Activated CD4-positive, alpha-beta memory T cell treated with anti-CD3 and anti-CD28 coated beads for 36 hours (primary cell): ENCODE measurements at regions of chr4 and their contacts with region 1.

Region 1: DNA sequence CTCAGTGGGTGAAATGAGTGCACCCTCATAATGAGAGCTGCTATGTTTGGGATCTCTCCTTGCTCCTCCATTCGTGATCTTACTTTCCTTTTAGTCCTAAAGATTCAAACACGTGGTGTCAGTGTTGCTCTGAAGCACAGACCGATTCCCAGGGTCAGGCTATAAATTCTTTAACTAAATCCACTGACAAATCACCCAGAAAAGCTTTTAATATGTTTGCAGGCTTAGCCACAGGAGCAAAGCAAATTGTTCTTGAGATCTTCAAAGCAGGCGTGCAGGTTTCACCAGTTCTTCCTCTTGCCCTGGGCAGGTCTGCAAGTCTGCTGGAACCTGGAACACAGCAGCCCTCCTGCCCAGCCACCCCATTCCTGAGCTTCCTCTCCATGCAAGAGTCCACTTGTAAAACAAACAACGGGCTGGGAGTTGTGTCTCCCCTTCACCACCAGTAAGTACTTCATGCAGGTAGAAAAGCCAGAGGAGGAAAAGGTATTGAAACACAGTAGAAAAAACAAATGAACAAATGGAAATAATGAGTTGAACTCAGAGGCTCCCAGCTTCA is 70.1 kb upstream of the ENPP6 start:
- DNase-seq: no peak
- H3K4me3 Mint-ChIP-seq: no peak overlapping the region
- H3K27ac Mint-ChIP-seq: no peak overlapping the region
- H3K4me1 Mint-ChIP-seq: peaks cover 61% of the 10 kb centered on the region
- H3K27me3 Mint-ChIP-seq: peaks cover 4% of the 10 kb centered on the region

Region 2: GRCh38 chr4:183840311-183840710 is 447.5 kb before region 1 on chr4:
- CTCF ChIA-PET with region 1: no interaction called
- POLR2A ChIA-PET with region 1: no interaction called
- intact Hi-C with region 1: no loop called
- DNase-seq: peak; percentile 75
- H3K4me3 Mint-ChIP-seq: no peak overlapping the region
- H3K27ac Mint-ChIP-seq: no peak overlapping the region
- H3K4me1 Mint-ChIP-seq: no peaks in the 10 kb centered on the region
- H3K27me3 Mint-ChIP-seq: peaks cover 24% of the 10 kb centered on the region

Region 3: GRCh38 chr4:184215709-184216328 is 72.0 kb before region 1 on chr4:
- CTCF ChIA-PET with region 1: no interaction called
- POLR2A ChIA-PET with region 1: no interaction called
- intact Hi-C with region 1: no loop called
- DNase-seq: no peak
- H3K4me3 Mint-ChIP-seq: no peak overlapping the region
- H3K27ac Mint-ChIP-seq: no peak overlapping the region
- H3K4me1 Mint-ChIP-seq: no peaks in the 10 kb centered on the region
- H3K27me3 Mint-ChIP-seq: peaks cover 10% of the 10 kb centered on the region

Region 4: DNA sequence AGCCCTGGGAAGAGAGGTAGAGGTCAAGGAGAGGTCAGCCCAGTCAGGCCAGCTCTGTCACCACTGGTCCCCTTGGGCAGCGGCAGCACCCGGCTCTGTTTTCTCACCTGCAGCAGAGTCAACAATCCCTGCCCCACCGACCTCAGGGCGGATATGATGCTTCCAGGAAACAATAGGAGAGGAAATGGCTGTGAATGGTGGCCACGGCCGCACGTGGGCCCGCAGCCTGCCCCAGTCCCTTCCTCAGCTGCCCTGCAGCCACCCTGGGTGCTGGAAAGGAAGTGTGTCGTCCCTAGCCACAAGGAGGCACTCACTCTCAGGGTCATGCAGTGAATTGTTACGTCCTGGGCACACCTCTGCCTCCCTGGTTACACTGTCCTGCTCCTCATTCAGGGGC is 22.4 kb after region 1 on chr4:
- CTCF ChIA-PET with region 1: interaction called, 5 read pairs
- POLR2A ChIA-PET with region 1: interaction called, 3 read pairs
- intact Hi-C with region 1: loop called (anchors 1 kb)
- DNase-seq: peak; percentile 81
- H3K4me3 Mint-ChIP-seq: peak overlapping the region; percentile 4
- H3K27ac Mint-ChIP-seq: peak overlapping the region; percentile 72
- H3K4me1 Mint-ChIP-seq: peaks cover 52% of the 10 kb centered on the region
- H3K27me3 Mint-ChIP-seq: no peaks in the 10 kb centered on the region

Region 5: GRCh38 chr4:184318852-184319251 is 31.1 kb after region 1 on chr4:
- CTCF ChIA-PET with region 1: interaction called, 5 read pairs
- POLR2A ChIA-PET with region 1: no interaction called
- intact Hi-C with region 1: loop called (anchors 1 kb)
- DNase-seq: no peak
- H3K4me3 Mint-ChIP-seq: no peak overlapping the region
- H3K27ac Mint-ChIP-seq: no peak overlapping the region
- H3K4me1 Mint-ChIP-seq: peaks cover 34% of the 10 kb centered on the region
- H3K27me3 Mint-ChIP-seq: peaks cover 1% of the 10 kb centered on the region

Region 6: GRCh38 chr4:184514121-184514988 is 226.6 kb after region 1 on chr4:
- CTCF ChIA-PET with region 1: interaction called, 27 read pairs
- POLR2A ChIA-PET with region 1: interaction called, 5 read pairs
- intact Hi-C with region 1: loop called (anchors 1 kb)
- DNase-seq: peak; percentile 90
- H3K4me3 Mint-ChIP-seq: peak overlapping the region; percentile 38
- H3K27ac Mint-ChIP-seq: peak overlapping the region; percentile 88
- H3K4me1 Mint-ChIP-seq: peaks cover 42% of the 10 kb centered on the region
- H3K27me3 Mint-ChIP-seq: no peaks in the 10 kb centered on the region